Transverse colon (tissue), 4 donors: ENCODE measurements at regions of chr10 and their contacts with region 1.

Region 1: GRCh38 chr10:102729029-102730026 is 14.4 kb upstream of the WBP1L start:
- DNase-seq: peak; percentile 88
- H3K4me3 ChIP-seq: no peak overlapping the region
- H3K27ac ChIP-seq: no peak overlapping the region
- H3K4me1 ChIP-seq: peaks cover 0 to 3% (median 0%) of the 10 kb centered on the region in 4 donors
- H3K27me3 ChIP-seq: no peaks in the 10 kb centered on the region
- CTCF ChIP-seq: peak; percentile 84 to 91 (median 90)
- EP300 ChIP-seq: no peak
- POLR2A ChIP-seq: no peak

Region 2: GRCh38 chr10:101986625-101986973 is 742.7 kb before region 1 on chr10:
- in situ Hi-C with region 1: no loop called
- intact Hi-C with region 1: no loop called
- DNase-seq: peak; percentile 23
- H3K4me3 ChIP-seq: no peak overlapping the region
- H3K27ac ChIP-seq: no peak overlapping the region
- H3K4me1 ChIP-seq: no peaks in the 10 kb centered on the region
- H3K27me3 ChIP-seq: no peaks in the 10 kb centered on the region
- CTCF ChIP-seq: no peak
- EP300 ChIP-seq: no peak
- POLR2A ChIP-seq: no peak

Region 3: GRCh38 chr10:102894466-102895213 is 165.3 kb after region 1 on chr10:
- in situ Hi-C with region 1: loop called in 1 of 4 experiments (anchors 10 kb)
- intact Hi-C with region 1: no loop called
- DNase-seq: no peak
- H3K4me3 ChIP-seq: no peak overlapping the region
- H3K27ac ChIP-seq: no peak overlapping the region
- H3K4me1 ChIP-seq: no peaks in the 10 kb centered on the region
- H3K27me3 ChIP-seq: no peaks in the 10 kb centered on the region
- CTCF ChIP-seq: no peak
- EP300 ChIP-seq: no peak
- POLR2A ChIP-seq: no peak

Region 4: DNA sequence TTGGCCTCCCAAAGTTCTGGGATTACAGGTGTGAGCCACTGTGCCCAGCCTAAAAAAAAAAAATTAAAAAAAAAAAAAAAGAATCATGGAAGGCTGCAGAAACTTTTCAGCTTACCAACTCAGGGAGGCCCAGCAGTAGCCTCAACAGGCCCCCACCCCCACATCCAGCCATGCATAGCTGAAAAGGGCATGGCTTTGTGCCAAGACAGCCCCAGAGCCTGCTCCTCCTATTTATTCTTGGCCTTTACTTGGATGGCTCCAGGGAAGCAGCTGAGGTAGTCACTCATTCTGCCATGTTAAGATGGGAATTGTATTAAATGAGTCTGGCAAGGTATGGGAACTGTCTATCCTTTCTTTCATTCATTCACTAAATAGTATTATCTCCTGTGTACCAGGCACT is 175.0 kb after region 1 on chr10:
- in situ Hi-C with region 1: loop called (anchors 10 kb)
- intact Hi-C with region 1: loop called (anchors 2 kb)
- DNase-seq: no peak
- H3K4me3 ChIP-seq: no peak overlapping the region
- H3K27ac ChIP-seq: no peak overlapping the region
- H3K4me1 ChIP-seq: no peaks in the 10 kb centered on the region
- H3K27me3 ChIP-seq: no peaks in the 10 kb centered on the region
- CTCF ChIP-seq: no peak
- EP300 ChIP-seq: no peak
- POLR2A ChIP-seq: no peak